ENCODE measurements at regions of chr1 and their contacts with region 1.

Region 1: DNA sequence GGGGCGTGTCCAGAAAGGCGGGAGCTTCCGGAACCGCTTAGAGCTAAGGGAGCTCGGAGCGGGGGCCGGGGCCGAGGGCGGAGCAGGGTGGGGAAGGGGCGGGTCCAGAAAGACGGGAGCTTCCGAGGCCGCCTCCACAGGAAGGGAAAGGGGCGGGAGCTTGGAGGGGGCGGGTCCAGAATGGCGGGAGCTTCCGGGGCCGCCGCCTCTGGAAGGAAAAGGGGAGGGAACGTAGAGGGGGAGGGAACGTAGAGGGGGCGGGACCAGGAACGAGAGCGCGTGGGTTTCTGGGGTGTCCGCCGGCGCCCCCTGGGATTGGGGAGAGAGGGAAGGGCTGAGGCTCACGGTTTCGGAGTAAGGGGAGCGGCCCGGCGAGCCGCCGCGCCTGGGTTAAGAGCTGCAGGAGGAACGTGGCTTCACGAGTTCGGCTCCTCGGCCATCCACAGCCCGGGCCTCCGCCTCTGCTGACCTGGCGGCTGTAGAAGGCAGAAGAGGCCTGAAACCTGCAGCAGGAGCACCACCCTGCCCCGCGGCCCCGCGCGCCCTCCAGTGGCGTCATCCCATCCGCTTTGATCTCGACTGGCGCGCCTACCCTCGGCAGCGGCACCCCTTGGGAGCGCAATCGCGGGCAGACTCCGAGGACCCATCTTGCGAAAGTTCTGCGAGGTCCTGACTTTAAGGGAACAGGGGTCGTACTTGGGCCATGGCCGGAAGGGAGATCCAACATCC is 22.9 kb upstream of the HPDL start:
- DNase-seq: peak; percentile 98
- CTCF ChIP-seq: peak; percentile 82

Region 2: DNA sequence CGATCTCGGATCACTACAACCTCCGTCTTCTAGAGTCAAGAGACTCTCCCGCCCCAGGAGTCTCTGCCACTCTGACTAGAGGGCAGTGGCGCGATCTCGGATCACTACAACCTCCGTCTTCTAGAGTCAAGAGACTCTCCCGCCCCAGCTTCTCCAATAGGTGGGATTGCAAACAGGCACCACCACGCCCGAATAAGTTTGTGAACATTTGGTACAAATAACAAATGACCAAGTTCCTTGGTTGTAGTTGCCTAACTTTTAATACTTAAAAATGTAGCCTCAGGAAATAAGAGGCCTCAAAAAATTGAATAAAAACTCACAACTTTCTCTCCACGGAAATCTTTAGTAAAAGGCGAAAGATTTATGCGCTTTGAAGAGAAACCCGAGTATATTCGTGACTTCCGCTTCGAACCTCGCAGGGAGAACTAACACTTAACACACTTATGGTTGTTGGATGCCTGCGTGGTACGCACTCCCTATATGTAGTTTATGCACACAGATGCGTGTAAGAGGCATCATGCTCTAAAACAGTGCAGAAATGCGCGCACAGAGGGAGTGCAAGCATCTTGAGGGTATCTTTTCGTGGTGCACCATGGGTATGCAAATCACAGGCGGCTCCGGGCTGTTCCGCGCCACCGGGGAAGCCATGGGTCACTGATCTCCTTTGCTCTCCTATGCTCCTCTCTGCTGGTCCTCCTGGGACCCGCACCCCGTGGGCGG is 484.0 kb before region 1 on chr1:
- CTCF ChIA-PET with region 1: interaction called, 3 read pairs
- POLR2A ChIA-PET with region 1: interaction called, 12 read pairs
- DNase-seq: peak; percentile 91
- CTCF ChIP-seq: peak; percentile 8

Region 3: DNA sequence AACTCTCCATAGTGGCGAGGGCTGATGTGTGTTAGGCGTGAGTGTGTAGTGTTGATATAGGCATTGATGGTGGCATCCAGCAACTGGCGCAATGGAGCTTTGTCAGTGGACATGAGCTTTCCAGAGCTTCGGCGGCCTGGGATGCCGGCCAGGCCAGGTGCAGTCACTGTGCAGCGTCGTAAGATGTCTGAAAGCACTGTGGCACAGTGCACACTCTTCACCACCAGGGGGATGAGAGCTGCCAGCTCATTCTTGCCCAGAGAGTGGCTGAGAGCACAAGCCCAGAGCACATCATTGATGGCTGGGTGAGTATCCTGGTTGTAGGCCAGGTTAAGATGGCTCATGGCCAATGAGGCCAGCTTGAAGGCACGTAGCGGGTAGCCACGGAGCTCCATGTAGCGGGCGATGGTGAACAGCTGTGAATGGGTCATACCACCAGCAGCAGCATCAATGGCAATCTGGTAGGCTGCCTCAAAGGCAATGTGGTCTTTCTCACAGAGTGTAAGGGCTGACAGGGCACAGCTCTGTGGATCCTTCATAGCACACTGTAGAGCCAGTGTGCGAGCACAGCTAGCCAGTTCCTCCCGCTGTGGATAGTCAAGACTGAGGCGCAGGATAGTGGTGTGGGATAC is 285.0 kb before region 1 on chr1:
- CTCF ChIA-PET with region 1: interaction called, 188 read pairs
- POLR2A ChIA-PET with region 1: no interaction called
- DNase-seq: peak; percentile 48
- CTCF ChIP-seq: peak; percentile 61

Region 4: GRCh38 chr1:45314266-45314665 is 10.5 kb after region 1 on chr1:
- CTCF ChIA-PET with region 1: interaction called, 11 read pairs
- POLR2A ChIA-PET with region 1: no interaction called
- DNase-seq: no peak
- CTCF ChIP-seq: no peak

Region 5: GRCh38 chr1:45339789-45340570 is 36.2 kb after region 1 on chr1 and contains the starts of genes MUTYH and TOE1:
- CTCF ChIA-PET with region 1: interaction called, 16 read pairs
- POLR2A ChIA-PET with region 1: interaction called, 15 read pairs
- DNase-seq: peak; percentile 96
- CTCF ChIP-seq: no peak